Endothelial cell of umbilical vein (primary cell): ENCODE measurements at regions of chr12 and their contacts with region 1.

Region 1: DNA sequence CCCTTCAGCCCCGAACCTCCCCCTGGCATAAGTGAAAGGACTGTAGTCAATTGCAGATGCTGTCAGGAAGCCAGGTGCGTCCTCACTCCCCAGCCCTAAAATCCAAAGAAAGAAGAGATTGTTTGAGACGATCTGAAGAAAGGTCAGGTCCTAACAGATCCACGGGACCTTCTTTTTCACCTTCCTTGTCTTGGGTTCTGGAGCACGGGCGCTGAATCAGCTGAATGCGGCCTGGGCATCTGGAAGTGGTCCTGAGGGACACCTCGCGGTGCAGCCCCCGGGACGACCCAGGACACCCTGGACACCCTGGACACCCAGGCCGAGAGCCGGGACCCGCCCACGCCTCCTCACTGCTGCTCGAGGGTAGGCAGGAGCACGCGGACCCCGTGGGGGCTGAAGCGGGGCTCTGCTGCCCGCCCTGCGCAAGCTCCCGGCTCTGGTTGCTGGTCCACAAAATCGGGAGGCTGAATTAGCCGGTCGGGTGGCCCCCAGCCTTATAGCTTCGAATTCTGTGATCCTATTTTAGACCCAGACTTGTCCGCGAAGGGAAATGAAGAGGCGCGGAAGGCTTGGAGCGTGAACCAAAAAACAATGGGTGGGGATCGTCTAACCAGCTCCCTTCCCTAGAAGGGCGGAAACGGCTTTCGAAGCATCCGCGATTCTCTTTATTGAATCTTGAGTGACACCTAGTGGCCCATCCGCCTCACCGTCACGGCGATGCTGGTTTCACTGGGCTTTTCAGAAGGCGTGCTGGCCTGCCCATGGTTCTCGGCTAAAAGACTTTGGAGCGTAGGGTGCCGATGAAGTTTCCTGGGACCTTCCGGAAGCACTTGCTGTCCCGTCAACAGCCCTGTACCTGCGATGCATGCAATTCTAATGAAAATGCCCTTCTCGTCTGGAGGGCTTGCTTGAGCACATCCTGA is 46.4 kb upstream of the PLXNC1 start:
- DNase-seq: peak; percentile 79
- H3K4me3 ChIP-seq: peak overlapping the region; percentile 33 to 58 (median 52)
- H3K27ac ChIP-seq: no peak overlapping the region
- H3K4me1 ChIP-seq: peaks cover 22% of the 10 kb centered on the region
- H3K27me3 ChIP-seq: peaks cover 6 to 13% of the 10 kb centered on the region in 2 experiments
- CTCF ChIP-seq: peak; percentile 80 to 86
- POLR2A ChIP-seq: no peak

Region 2: DNA sequence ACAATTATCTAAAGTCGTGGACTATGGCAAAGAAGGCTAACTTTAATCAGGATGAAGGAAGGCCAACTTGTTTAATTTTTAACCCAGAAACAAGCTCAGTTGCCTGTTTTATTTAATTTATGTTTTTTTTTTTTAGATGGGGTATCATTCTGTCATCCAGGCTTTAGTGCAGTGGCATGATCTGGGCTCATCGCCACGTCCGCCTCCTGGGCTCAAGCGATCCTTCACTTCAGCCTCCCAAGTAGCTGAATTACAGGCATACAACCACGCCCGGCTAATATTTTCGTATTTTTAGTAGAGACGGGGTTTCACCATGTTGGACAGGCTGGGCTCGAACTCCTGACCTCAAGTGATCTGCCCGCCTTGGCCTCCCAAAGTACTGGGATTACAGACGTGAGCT is 704.6 kb before region 1 on chr12:
- CTCF ChIA-PET with region 1: interaction called, 5 read pairs
- POLR2A ChIA-PET with region 1: no interaction called
- dilution Hi-C with region 1: no loop called
- intact Hi-C with region 1: loop called (anchors 5 kb)
- DNase-seq: no peak
- H3K4me3 ChIP-seq: no peak overlapping the region
- H3K27ac ChIP-seq: no peak overlapping the region
- H3K4me1 ChIP-seq: no peaks in the 10 kb centered on the region
- H3K27me3 ChIP-seq: no peaks in the 10 kb centered on the region
- CTCF ChIP-seq: no peak
- POLR2A ChIP-seq: no peak

Region 3: DNA sequence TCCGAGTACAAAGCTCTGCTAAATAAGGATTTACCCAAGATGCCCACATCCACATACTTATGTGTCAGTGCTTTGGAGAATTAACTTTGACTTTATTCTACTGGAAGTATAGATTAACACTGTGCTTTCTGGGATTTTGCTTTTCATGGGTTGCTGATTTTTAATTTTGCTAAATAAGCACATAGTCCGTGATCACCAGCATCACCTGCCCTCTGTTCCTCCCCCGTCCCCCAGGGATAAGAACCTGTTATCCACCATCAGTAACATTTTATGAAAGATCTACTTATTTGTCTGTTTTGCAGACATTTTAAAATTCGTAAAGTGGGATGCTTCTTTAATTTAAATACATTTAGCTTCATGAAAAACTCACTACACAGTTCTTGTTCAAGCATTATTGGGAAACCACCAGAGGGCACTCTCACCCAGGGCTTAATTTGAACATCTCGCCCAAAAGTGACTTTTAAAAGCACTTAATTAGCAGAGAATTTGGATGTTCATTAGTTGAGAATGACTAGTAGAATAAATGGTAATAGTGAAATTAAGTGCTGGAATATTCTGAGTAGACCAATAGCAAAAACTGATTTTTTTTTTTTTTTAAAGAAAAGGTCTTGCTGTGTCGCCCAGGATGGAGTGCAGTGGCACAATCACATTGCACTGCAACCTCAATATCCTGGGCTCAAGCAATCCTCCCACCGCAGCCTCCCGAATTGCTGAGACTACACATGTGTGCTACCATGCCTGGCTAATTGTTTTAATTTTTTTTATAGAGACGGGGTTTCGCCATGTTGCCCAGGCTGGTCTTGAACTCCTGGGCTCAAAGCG is 599.0 kb before region 1 on chr12:
- CTCF ChIA-PET with region 1: interaction called, 487 read pairs
- POLR2A ChIA-PET with region 1: no interaction called
- dilution Hi-C with region 1: no loop called
- intact Hi-C with region 1: loop called (anchors 1 kb)
- DNase-seq: peak; percentile 57
- H3K4me3 ChIP-seq: no peak overlapping the region
- H3K27ac ChIP-seq: no peak overlapping the region
- H3K4me1 ChIP-seq: no peaks in the 10 kb centered on the region
- H3K27me3 ChIP-seq: no peaks in the 10 kb centered on the region
- CTCF ChIP-seq: peak; percentile 55 to 60
- POLR2A ChIP-seq: no peak

Region 4: DNA sequence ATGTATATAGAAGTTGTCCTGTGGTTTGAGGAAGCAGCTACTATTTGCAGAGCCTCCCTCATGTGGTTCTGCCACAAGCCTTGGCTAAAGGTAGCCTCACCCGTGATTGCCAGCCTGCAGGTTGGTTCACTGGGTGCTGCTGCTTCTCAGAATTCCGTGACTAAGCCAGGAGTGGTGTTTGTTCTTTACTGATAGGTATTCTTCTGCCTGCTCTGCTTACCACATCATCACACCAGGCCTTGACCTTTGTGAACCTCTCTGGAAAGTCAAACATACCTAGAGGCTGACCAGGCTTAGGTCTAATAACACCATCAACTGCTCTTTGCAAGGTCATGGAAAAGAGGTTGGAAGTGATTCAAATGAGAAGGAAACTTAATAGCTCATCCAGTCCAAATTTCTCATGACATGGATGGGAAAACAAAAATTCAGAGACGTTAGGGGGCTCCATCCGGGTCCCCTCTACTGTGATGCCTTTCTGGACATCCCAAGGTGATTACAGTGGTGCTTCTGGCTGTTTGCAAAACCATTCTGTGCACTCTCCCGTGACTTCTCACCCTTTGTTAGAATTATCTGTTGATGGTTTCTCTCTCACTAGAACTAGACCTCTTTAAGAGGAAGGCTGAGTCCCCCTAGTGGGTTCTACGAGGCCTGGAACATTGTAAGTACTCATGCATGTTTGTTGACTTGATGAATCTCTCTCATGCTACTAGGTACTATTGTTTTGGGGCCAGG is 538.0 kb before region 1 on chr12:
- CTCF ChIA-PET with region 1: interaction called, 366 read pairs
- POLR2A ChIA-PET with region 1: no interaction called
- dilution Hi-C with region 1: no loop called
- intact Hi-C with region 1: loop called (anchors 1 kb)
- DNase-seq: no peak
- H3K4me3 ChIP-seq: no peak overlapping the region
- H3K27ac ChIP-seq: no peak overlapping the region
- H3K4me1 ChIP-seq: no peaks in the 10 kb centered on the region
- H3K27me3 ChIP-seq: peaks cover 8 to 10% of the 10 kb centered on the region in 2 experiments
- CTCF ChIP-seq: peak in 1 of 2 donors; percentile 11
- POLR2A ChIP-seq: no peak

Region 5: GRCh38 chr12:93759512-93760081 is 342.4 kb before region 1 on chr12:
- CTCF ChIA-PET with region 1: interaction called, 294 read pairs
- POLR2A ChIA-PET with region 1: no interaction called
- dilution Hi-C with region 1: no loop called
- intact Hi-C with region 1: no loop called
- DNase-seq: peak; percentile 43
- H3K4me3 ChIP-seq: no peak overlapping the region
- H3K27ac ChIP-seq: no peak overlapping the region
- H3K4me1 ChIP-seq: no peaks in the 10 kb centered on the region
- H3K27me3 ChIP-seq: no peaks in the 10 kb centered on the region
- CTCF ChIP-seq: no peak
- POLR2A ChIP-seq: no peak

Region 6: DNA sequence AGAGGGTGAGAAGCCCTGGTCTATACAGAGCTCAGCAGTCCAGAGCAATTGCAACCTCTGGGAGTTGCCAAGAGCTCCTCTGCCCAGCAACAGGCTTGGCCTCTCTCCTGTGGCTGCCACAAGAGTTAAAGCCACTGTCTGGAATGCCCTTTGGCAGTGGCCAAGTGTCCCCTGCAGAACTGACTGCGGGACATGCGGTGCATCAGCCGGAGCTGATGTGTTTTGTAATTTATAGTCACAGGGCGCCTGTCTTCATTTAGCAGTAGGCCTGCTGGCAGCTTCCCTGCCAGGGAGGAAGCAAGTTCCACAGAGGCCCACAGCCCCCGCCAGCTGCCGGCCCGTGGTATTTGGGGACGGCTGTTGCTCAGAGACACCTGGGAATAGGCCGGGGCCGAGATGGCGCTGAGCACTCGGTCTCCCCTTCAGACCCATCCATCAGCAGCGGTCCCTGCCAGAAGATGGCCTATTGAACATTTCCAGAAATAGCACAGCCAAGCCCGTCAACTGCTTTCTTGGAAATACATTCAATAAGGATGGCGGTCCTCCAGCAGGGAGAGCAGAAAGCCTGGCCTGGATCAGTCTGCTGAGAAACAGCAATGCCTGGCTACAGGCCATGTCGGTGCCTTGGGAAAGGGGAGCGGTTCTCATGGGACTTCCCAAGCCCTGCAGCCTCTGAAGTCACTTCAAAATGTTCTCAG is 207.5 kb before region 1 on chr12:
- CTCF ChIA-PET with region 1: interaction called, 4 read pairs
- POLR2A ChIA-PET with region 1: no interaction called
- dilution Hi-C with region 1: no loop called
- intact Hi-C with region 1: loop called (anchors 5 kb)
- DNase-seq: no peak
- H3K4me3 ChIP-seq: no peak overlapping the region
- H3K27ac ChIP-seq: no peak overlapping the region
- H3K4me1 ChIP-seq: no peaks in the 10 kb centered on the region
- H3K27me3 ChIP-seq: no peaks in the 10 kb centered on the region
- CTCF ChIP-seq: no peak
- POLR2A ChIP-seq: no peak

Region 7: GRCh38 chr12:94133964-94134795 is 32.2 kb after region 1 on chr12:
- CTCF ChIA-PET with region 1: interaction called, 10 read pairs
- POLR2A ChIA-PET with region 1: no interaction called
- dilution Hi-C with region 1: no loop called
- intact Hi-C with region 1: no loop called
- DNase-seq: peak; percentile 56
- H3K4me3 ChIP-seq: no peak overlapping the region
- H3K27ac ChIP-seq: no peak overlapping the region
- H3K4me1 ChIP-seq: no peaks in the 10 kb centered on the region
- H3K27me3 ChIP-seq: peaks cover 8 to 9% of the 10 kb centered on the region in 2 experiments
- CTCF ChIP-seq: peak; percentile 40 to 58
- POLR2A ChIP-seq: no peak